ENCODE measurements at regions of chr10 and their contacts with region 1.

Region 1: DNA sequence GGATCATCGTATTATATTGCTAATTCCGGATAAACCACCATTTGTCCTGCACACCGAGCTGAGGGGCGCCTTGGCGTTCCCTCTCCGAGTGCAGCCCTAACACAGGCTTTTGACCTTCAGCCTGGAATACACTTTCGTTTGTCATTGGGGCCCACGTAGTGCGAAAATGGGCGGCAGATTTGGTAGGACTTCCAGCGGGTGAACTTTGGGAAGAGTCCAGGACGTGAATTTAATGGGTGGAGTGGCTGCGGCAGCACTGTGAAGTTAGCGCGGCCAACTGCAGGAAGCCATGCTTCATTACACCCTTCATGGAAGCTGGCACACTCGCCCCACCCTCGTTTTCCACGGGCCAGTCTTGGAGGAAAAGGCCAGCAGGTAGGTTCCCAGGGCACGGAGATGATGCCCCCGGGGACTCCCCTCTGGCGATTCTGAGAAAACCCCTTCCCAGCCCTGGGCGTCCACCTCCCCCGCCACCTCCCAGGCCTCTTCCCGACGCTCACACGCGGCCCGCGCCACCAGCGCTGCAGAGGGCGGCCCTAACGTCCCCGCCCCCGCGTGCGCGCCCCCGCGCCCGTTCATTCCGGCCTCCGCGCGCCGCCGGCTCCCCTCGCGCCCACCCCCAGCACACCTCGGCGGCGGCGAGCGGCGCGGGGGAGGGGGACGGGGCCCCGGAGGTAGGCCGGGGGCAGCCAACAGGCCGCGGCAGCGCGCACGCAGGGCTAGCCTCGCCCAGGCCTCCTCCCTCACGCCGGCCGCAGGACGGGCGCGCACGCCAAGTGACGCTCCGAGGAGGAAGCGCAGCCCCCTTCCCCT is at the start of gene MLLT10:
- DNase-seq: peak; percentile 94
- H3K4me3 ChIP-seq: peak within 1 kb of the TSS; percentile 68 to 93 (median 82)
- H3K27ac ChIP-seq: peak within 1 kb of the TSS; percentile 91 to 98 (median 95)
- H3K4me1 ChIP-seq: peaks cover 0 to 36% (median 14%) of the 10 kb centered on the region in 4 donors
- H3K27me3 ChIP-seq: peaks cover 6% of the 10 kb centered on the region
- CTCF ChIP-seq: peak; percentile 33 to 80 (median 42)
- EP300 ChIP-seq: no peak
- POLR2A ChIP-seq: peak; percentile 77
- total RNA-seq, gene MLLT10: 12.0 to 43.0 (median 28.5) TPM

Region 2: GRCh38 chr10:20582041-20582440 is 951.6 kb before region 1 on chr10:
- in situ Hi-C with region 1: no loop called
- intact Hi-C with region 1: no loop called
- DNase-seq: no peak
- H3K4me3 ChIP-seq: no peak overlapping the region
- H3K27ac ChIP-seq: no peak overlapping the region
- H3K4me1 ChIP-seq: no peaks in the 10 kb centered on the region
- H3K27me3 ChIP-seq: no peaks in the 10 kb centered on the region
- CTCF ChIP-seq: no peak
- EP300 ChIP-seq: no peak
- POLR2A ChIP-seq: no peak

Region 3: GRCh38 chr10:22670788-22671187 is 1137.1 kb after region 1 on chr10:
- in situ Hi-C with region 1: no loop called
- intact Hi-C with region 1: loop called (anchors 10 kb)
- DNase-seq: no peak
- H3K4me3 ChIP-seq: no peak overlapping the region
- H3K27ac ChIP-seq: no peak overlapping the region
- H3K4me1 ChIP-seq: peaks cover 0 to 42% (median 8%) of the 10 kb centered on the region in 4 donors
- H3K27me3 ChIP-seq: no peaks in the 10 kb centered on the region
- CTCF ChIP-seq: no peak
- EP300 ChIP-seq: no peak
- POLR2A ChIP-seq: no peak